Activated CD8-positive, alpha-beta T cell treated with anti-CD3 and anti-CD28 coated beads for 36 hours (primary cell): ENCODE measurements at regions of chr6 and their contacts with region 1.

Region 1: DNA sequence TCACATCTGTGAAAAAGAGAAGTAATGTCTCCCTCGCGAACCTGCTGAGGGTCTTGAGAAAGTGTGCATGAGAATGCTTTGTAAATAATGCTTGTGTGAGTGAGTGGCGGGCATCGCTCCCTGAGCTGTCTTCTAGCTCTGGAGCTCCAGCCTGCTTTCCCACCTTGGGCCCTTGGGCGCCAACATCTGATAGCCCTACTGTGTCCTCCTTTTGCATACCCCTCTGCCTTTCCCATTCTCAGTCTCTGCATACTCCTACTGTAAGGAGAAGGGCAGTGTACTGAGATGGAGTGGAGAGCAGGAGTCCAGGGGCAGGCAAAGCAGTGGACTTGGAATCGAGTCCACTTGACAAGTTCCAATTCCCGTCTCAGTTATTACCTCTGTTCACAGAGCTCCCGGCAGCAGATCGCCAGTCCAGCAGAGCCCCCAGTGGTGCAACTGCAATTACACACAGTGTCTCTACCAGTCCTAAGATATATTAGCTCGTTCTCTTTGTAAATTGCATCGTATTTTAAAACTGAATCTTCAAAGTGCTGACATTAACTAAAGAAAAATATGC is 847 bp upstream of the NCR2 start:
- DNase-seq: peak; percentile 43
- ATAC-seq: no peak
- H3K4me3 Mint-ChIP-seq: peak overlapping the region; percentile 33
- H3K27ac Mint-ChIP-seq: peak overlapping the region; percentile 93
- H3K4me1 Mint-ChIP-seq: peaks cover 59% of the 10 kb centered on the region
- H3K27me3 Mint-ChIP-seq: no peaks in the 10 kb centered on the region
- CTCF ChIP-seq: peak; percentile 36

Region 2: GRCh38 chr6:41083072-41083471 is 251.5 kb before region 1 on chr6:
- CTCF ChIA-PET with region 1: no interaction called
- POLR2A ChIA-PET with region 1: no interaction called
- intact Hi-C with region 1: no loop called
- DNase-seq: no peak
- ATAC-seq: no peak
- H3K4me3 Mint-ChIP-seq: no peak overlapping the region
- H3K27ac Mint-ChIP-seq: no peak overlapping the region
- H3K4me1 Mint-ChIP-seq: peaks cover 42% of the 10 kb centered on the region
- H3K27me3 Mint-ChIP-seq: no peaks in the 10 kb centered on the region
- CTCF ChIP-seq: no peak

Region 3: GRCh38 chr6:41298785-41299502 is 35.6 kb before region 1 on chr6:
- CTCF ChIA-PET with region 1: interaction called, 10 read pairs
- POLR2A ChIA-PET with region 1: interaction called, 3 read pairs
- intact Hi-C with region 1: no loop called
- DNase-seq: no peak
- ATAC-seq: peak; percentile 89
- H3K4me3 Mint-ChIP-seq: peak overlapping the region; percentile 10
- H3K27ac Mint-ChIP-seq: peak overlapping the region; percentile 82
- H3K4me1 Mint-ChIP-seq: peaks cover 50% of the 10 kb centered on the region
- H3K27me3 Mint-ChIP-seq: peaks cover 5% of the 10 kb centered on the region
- CTCF ChIP-seq: no peak

Region 4: GRCh38 chr6:41318654-41319565 is 15.7 kb before region 1 on chr6:
- CTCF ChIA-PET with region 1: interaction called, 106 read pairs
- POLR2A ChIA-PET with region 1: interaction called, 34 read pairs
- intact Hi-C with region 1: no loop called
- DNase-seq: peak; percentile 90
- ATAC-seq: peak; percentile 99
- H3K4me3 Mint-ChIP-seq: peak overlapping the region; percentile 52
- H3K27ac Mint-ChIP-seq: peak overlapping the region; percentile 80
- H3K4me1 Mint-ChIP-seq: peaks cover 10% of the 10 kb centered on the region
- H3K27me3 Mint-ChIP-seq: peaks cover 14% of the 10 kb centered on the region
- CTCF ChIP-seq: peak; percentile 99

Region 5: GRCh38 chr6:41344876-41345275 is 10.3 kb after region 1 on chr6:
- CTCF ChIA-PET with region 1: interaction called, 33 read pairs
- POLR2A ChIA-PET with region 1: interaction called, 11 read pairs
- intact Hi-C with region 1: no loop called
- DNase-seq: peak; percentile 70
- ATAC-seq: peak; percentile 99
- H3K4me3 Mint-ChIP-seq: peak overlapping the region; percentile 37
- H3K27ac Mint-ChIP-seq: peak overlapping the region; percentile 90
- H3K4me1 Mint-ChIP-seq: peaks cover 32% of the 10 kb centered on the region
- H3K27me3 Mint-ChIP-seq: no peaks in the 10 kb centered on the region
- CTCF ChIP-seq: no peak

Region 6: DNA sequence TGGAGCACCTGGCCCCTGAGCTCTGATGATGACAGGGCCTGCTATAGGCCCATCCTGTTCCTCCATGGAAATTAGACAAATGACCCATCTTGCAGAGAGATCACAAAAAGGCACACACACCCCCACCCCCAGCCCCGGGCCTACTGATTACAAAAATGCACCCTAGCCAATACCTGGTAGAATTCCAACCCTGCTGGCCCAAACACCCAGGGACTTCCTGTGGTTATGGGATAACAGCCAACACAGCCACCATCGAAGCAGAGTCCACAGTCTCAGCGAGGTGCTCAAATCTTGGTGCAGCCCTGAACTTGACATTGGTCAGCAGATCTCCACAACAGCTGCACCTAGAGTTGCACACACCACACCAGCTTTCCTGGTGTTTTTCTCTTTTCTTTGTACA is 17.8 kb after region 1 on chr6:
- CTCF ChIA-PET with region 1: interaction called, 33 read pairs
- POLR2A ChIA-PET with region 1: interaction called, 11 read pairs
- intact Hi-C with region 1: no loop called
- DNase-seq: no peak
- ATAC-seq: no peak
- H3K4me3 Mint-ChIP-seq: no peak overlapping the region
- H3K27ac Mint-ChIP-seq: no peak overlapping the region
- H3K4me1 Mint-ChIP-seq: no peaks in the 10 kb centered on the region
- H3K27me3 Mint-ChIP-seq: peaks cover 1% of the 10 kb centered on the region
- CTCF ChIP-seq: no peak